HEK293 (cell line): ENCODE measurements at regions of chr17 and their contacts with region 1.

Region 1: DNA sequence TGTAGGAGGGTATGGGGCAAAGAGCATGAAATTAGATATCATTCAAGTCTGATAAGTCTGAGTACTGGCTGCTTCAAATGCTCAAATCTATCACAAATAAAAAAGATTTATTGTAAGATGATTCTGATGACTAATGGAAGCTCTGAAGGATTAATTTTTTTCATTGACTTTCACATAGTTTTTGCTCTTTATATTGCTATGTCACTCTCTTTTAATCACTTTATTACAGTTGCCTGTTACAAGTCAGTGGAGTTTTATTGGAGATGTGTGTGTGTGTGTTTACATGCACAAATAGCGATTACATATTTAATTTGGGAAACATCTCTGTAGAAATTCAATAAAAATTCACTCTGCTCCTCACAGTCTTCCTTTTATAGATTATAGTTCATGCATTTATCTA is 15.0 kb downstream of the MAP2K4 start:
- H3K4me3 ChIP-seq: no peak overlapping the region
- H3K27ac ChIP-seq: no peak overlapping the region
- H3K4me1 ChIP-seq: peaks cover 53% of the 10 kb centered on the region
- CTCF ChIP-seq: no peak

Region 2: DNA sequence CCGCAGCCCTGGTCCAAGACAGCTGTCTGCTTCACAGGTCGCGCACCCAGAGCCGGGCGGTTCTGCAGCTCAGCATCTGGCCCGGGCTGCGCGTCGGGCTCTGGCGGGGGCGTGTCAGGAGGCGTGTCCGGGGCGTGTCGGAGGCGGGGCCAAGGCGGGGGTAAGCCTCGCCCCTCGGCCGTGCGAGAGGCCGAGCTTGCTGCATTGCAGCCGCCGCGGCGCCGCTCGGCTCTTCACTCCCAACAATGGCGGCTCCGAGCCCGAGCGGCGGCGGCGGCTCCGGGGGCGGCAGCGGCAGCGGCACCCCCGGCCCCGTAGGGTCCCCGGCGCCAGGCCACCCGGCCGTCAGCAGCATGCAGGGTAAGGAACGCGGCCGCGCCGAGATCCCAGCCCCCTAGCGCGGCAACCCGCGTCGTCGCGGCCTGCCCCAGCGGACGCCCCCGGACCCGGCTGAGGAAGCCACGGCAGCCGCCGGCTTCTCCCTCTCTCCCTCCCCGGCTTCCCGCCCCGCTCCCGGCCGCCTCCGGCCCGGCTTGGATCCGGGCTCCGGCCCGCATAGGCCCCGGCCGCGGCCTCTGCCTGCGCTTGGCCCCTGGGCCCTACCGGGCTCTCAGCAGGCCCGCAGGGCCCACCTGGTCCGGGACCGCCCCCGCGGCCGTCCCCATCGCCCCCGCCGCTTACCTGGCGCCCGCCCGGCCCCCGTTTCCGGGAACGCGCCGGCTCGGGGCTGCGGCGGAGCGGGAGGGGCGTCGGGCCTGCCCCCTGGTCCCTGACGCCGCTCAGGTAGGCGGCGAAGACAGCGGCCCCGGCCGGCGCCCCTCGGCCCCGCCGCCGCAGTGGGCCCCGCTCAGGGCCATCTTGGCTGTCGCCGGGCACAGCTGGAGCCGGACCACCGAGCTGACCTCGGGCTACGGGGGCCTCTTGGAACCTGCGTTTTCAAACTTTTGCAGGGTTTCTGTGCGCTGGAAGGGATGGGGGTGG is 14.8 kb before region 1 on chr17 and contains the start of gene MAP2K4:
- CTCF ChIA-PET with region 1: interaction called, 4 read pairs
- POLR2A ChIA-PET with region 1: interaction called, 10 read pairs
- H3K4me3 ChIP-seq: peak within 1 kb of the TSS; percentile 80
- H3K27ac ChIP-seq: peak within 1 kb of the TSS; percentile 87
- H3K4me1 ChIP-seq: peaks cover 31% of the 10 kb centered on the region
- CTCF ChIP-seq: no peak

Region 3: GRCh38 chr17:12078791-12079190 is 43.1 kb after region 1 on chr17:
- CTCF ChIA-PET with region 1: no interaction called
- POLR2A ChIA-PET with region 1: no interaction called
- H3K4me3 ChIP-seq: no peak overlapping the region
- H3K27ac ChIP-seq: no peak overlapping the region
- H3K4me1 ChIP-seq: peaks cover 2% of the 10 kb centered on the region; the same call in 1 of the 2 replicates
- CTCF ChIP-seq: no peak